ENCODE measurements at regions of chr1 and their contacts with region 1.

Region 1: GRCh38 chr1:171313835-171314320 is at the start of gene FMO4:
- DNase-seq: peak; percentile 77
- ATAC-seq: peak; percentile 100
- H3K4me3 Mint-ChIP-seq: peak within 1 kb of the TSS; percentile 68
- H3K27ac Mint-ChIP-seq: peak within 1 kb of the TSS; percentile 91
- H3K4me1 Mint-ChIP-seq: peaks cover 36% of the 10 kb centered on the region
- H3K27me3 Mint-ChIP-seq: peaks cover 5% of the 10 kb centered on the region
- CTCF ChIP-seq: peak; percentile 42; the same call in 1 of the 2 replicates
- total RNA-seq, gene FMO4: 1.8 to 3.8 TPM (median 3.6 TPM) in 3 replicates

Region 2: GRCh38 chr1:171141688-171142415 is 172.0 kb before region 1 on chr1:
- CTCF ChIA-PET with region 1: interaction called, 19 read pairs
- POLR2A ChIA-PET with region 1: no interaction called
- DNase-seq: no peak
- ATAC-seq: peak; percentile 87
- H3K4me3 Mint-ChIP-seq: no peak overlapping the region
- H3K27ac Mint-ChIP-seq: peak overlapping the region; percentile 50
- H3K4me1 Mint-ChIP-seq: peaks cover 34% of the 10 kb centered on the region
- H3K27me3 Mint-ChIP-seq: no peaks in the 10 kb centered on the region
- CTCF ChIP-seq: no peak

Region 3: GRCh38 chr1:171220581-171221054 is 93.3 kb before region 1 on chr1:
- CTCF ChIA-PET with region 1: interaction called, 10 read pairs
- POLR2A ChIA-PET with region 1: no interaction called
- DNase-seq: peak; percentile 69
- ATAC-seq: peak; percentile 91
- H3K4me3 Mint-ChIP-seq: peak overlapping the region; percentile 73
- H3K27ac Mint-ChIP-seq: peak overlapping the region; percentile 99
- H3K4me1 Mint-ChIP-seq: peaks cover 62% of the 10 kb centered on the region
- H3K27me3 Mint-ChIP-seq: no peaks in the 10 kb centered on the region; the same call in 1 of the 2 replicates
- CTCF ChIP-seq: no peak

Region 4: GRCh38 chr1:171251042-171251951 is 62.6 kb before region 1 on chr1:
- CTCF ChIA-PET with region 1: interaction called, 83 read pairs
- POLR2A ChIA-PET with region 1: no interaction called
- DNase-seq: peak; percentile 44
- ATAC-seq: peak; percentile 69
- H3K4me3 Mint-ChIP-seq: peak overlapping the region; percentile 71
- H3K27ac Mint-ChIP-seq: peak overlapping the region; percentile 76; the same call in 1 of the 2 replicates
- H3K4me1 Mint-ChIP-seq: peaks cover 52% of the 10 kb centered on the region
- H3K27me3 Mint-ChIP-seq: peaks cover 25% of the 10 kb centered on the region
- CTCF ChIP-seq: peak; percentile 44; the same call in 1 of the 2 replicates

Region 5: GRCh38 chr1:171355727-171356126 is 41.8 kb after region 1 on chr1:
- CTCF ChIA-PET with region 1: interaction called, 20 read pairs
- POLR2A ChIA-PET with region 1: no interaction called
- DNase-seq: no peak
- ATAC-seq: no peak
- H3K4me3 Mint-ChIP-seq: no peak overlapping the region
- H3K27ac Mint-ChIP-seq: no peak overlapping the region
- H3K4me1 Mint-ChIP-seq: peaks cover 23% of the 10 kb centered on the region
- H3K27me3 Mint-ChIP-seq: no peaks in the 10 kb centered on the region
- CTCF ChIP-seq: no peak

Measured in WTC11 (cell line).